Activated CD4-positive, alpha-beta memory T cell treated with anti-CD3 and anti-CD28 coated beads for 36 hours (primary cell): ENCODE measurements at regions of chr20 and their contacts with region 1.

Region 1: GRCh38 chr20:35092524-35093266 is at the start of gene TRPC4AP:
- DNase-seq: peak; percentile 93
- H3K4me3 Mint-ChIP-seq: peak within 1 kb of the TSS; percentile 84
- H3K27ac Mint-ChIP-seq: peak within 1 kb of the TSS; percentile 96
- H3K4me1 Mint-ChIP-seq: peaks cover 52% of the 10 kb centered on the region
- H3K27me3 Mint-ChIP-seq: no peaks in the 10 kb centered on the region
- total RNA-seq, gene TRPC4AP: 45.8 to 48.3 TPM

Region 2: GRCh38 chr20:34876162-34877001 is 216.3 kb before region 1 on chr20 and contains the start of gene ACSS2:
- CTCF ChIA-PET with region 1: interaction called, 17 read pairs
- POLR2A ChIA-PET with region 1: no interaction called
- intact Hi-C with region 1: loop called (anchors 2 kb)
- DNase-seq: peak; percentile 99
- H3K4me3 Mint-ChIP-seq: peak within 1 kb of the TSS; percentile 84
- H3K27ac Mint-ChIP-seq: peak within 1 kb of the TSS; percentile 80
- H3K4me1 Mint-ChIP-seq: peaks cover 51% of the 10 kb centered on the region
- H3K27me3 Mint-ChIP-seq: no peaks in the 10 kb centered on the region
- total RNA-seq, gene ACSS2: 45.6 to 47.7 TPM

Region 3: GRCh38 chr20:35055445-35056276 is 37.0 kb before region 1 on chr20:
- CTCF ChIA-PET with region 1: interaction called, 11 read pairs
- POLR2A ChIA-PET with region 1: interaction called, 8 read pairs
- intact Hi-C with region 1: loop called (anchors 1 kb)
- DNase-seq: peak; percentile 18
- H3K4me3 Mint-ChIP-seq: peak overlapping the region; percentile 63
- H3K27ac Mint-ChIP-seq: peak overlapping the region; percentile 95
- H3K4me1 Mint-ChIP-seq: peaks cover 45% of the 10 kb centered on the region
- H3K27me3 Mint-ChIP-seq: no peaks in the 10 kb centered on the region

Region 4: GRCh38 chr20:35146920-35147574 is 54.4 kb after region 1 on chr20 and contains the start of gene EDEM2:
- CTCF ChIA-PET with region 1: interaction called, 41 read pairs
- POLR2A ChIA-PET with region 1: interaction called, 16 read pairs
- intact Hi-C with region 1: loop called (anchors 2 kb)
- DNase-seq: peak; percentile 97
- H3K4me3 Mint-ChIP-seq: peak within 1 kb of the TSS; percentile 93
- H3K27ac Mint-ChIP-seq: peak within 1 kb of the TSS; percentile 91
- H3K4me1 Mint-ChIP-seq: peaks cover 35% of the 10 kb centered on the region
- H3K27me3 Mint-ChIP-seq: no peaks in the 10 kb centered on the region
- total RNA-seq, gene EDEM2: 17.3 to 19.9 TPM

Region 5: GRCh38 chr20:35277531-35278395 is 185.1 kb after region 1 on chr20 and contains the start of gene MMP24OS:
- CTCF ChIA-PET with region 1: no interaction called
- POLR2A ChIA-PET with region 1: no interaction called
- intact Hi-C with region 1: loop called (anchors 5 kb)
- DNase-seq: peak; percentile 92
- H3K4me3 Mint-ChIP-seq: peak within 1 kb of the TSS; percentile 98
- H3K27ac Mint-ChIP-seq: peak within 1 kb of the TSS; percentile 96
- H3K4me1 Mint-ChIP-seq: peaks cover 20% of the 10 kb centered on the region
- H3K27me3 Mint-ChIP-seq: no peaks in the 10 kb centered on the region
- total RNA-seq, gene MMP24OS: 35.0 to 38.1 TPM